Astrocyte of the cerebellum (primary cell): ENCODE measurements at regions of chr12 and their contacts with region 1.

Region 1: GRCh38 chr12:110134691-110135411 is 10.7 kb downstream of the IFT81 start:
- DNase-seq: no peak
- H3K4me3 ChIP-seq: no peak overlapping the region
- CTCF ChIP-seq: no peak

Region 2: GRCh38 chr12:109995686-109996482 is 139.0 kb before region 1 on chr12 and contains the start of gene GIT2:
- in situ Hi-C with region 1: no loop called
- DNase-seq: peak; percentile 80
- H3K4me3 ChIP-seq: peak within 1 kb of the TSS; percentile 87
- CTCF ChIP-seq: no peak

Region 3: GRCh38 chr12:110065540-110065939 is 69.3 kb before region 1 on chr12:
- in situ Hi-C with region 1: loop called (anchors 10 kb)
- DNase-seq: no peak
- H3K4me3 ChIP-seq: no peak overlapping the region
- CTCF ChIP-seq: no peak

Region 4: DNA sequence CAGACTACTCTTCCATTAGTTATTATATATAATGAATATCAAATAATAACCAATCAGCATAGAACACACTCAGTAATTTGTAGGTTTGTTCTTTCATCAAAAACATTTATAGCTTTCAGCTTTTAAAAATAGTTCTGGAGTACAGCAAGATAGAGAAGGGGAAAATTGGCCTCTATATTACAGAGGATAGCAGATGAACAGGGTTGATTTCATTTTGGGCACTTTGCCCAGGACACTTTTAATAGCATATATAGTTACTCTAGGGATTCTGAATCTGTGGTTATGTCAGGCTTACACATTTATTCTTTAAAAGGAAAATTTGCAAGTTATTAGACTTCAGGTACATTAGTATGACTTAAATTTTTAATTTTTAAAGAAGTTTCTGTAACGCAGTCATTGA is 41.9 kb after region 1 on chr12:
- in situ Hi-C with region 1: no loop called
- DNase-seq: peak; percentile 23
- H3K4me3 ChIP-seq: no peak overlapping the region
- CTCF ChIP-seq: no peak